ENCODE measurements at regions of chr20 and their contacts with region 1.

Region 1: GRCh38 chr20:50085452-50086365 is 27.2 kb downstream of the UBE2V1 start:
- DNase-seq: no peak
- H3K4me3 ChIP-seq: no peak overlapping the region
- CTCF ChIP-seq: peak; percentile 65

Region 2: DNA sequence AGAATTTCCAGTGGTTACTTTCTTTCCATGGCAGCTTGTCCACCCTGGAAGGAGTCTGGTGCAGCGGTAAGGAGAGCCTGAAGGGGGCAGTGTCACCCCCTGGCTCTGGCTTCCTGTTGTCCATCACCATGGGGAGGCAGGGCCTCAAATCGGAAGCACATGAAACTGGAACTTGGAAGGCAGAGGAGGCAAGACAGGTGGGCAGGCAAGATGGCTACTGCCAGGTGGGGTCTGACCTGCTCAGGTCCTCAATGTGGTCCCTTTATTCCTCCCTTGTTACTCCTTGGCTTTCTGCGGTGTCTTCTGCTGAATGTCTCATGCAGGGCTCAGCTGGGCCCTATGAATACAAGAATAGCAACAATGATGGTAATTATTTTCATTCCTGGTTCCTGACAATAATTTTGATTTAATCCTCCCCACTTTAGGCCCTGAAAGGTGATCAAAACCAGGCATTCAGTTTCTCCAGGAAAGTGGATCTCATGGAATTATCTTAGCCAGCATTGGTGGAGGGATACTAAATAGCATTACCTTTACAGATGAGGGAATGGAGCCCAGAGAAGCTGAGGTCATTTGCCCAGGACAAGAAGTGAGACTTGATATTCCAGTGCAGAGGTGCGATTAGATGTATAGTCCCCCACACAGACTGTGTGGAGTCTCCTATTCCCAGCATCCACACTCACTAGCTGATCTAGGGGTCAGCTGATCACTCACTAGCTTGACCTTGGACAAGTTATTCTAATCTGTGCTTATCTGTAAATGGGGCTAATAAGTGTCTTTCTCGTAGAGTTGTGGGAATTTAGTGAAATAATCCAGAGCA is 120.5 kb before region 1 on chr20:
- CTCF ChIA-PET with region 1: interaction called, 12 read pairs
- POLR2A ChIA-PET with region 1: no interaction called
- DNase-seq: no peak
- H3K4me3 ChIP-seq: no peak overlapping the region
- CTCF ChIP-seq: peak; percentile 57

Region 3: DNA sequence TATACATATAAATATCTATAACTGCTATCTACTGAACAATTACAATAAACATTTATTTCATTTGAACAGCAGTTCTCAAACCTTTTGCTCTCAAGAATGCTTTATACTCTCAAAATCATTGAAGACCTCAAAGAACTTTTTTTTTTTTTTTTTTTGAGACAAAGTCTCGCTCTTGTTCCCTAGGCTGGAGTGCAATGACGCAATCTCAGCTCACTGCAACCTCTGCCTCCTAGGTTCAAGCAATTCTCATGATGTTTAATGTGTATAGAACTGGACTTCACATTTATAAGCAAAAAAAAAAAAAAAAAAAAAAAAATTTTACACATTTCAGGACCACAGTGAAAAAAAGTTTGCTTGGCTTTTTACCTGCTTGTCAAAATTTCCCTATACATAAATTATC is 15.6 kb after region 1 on chr20:
- CTCF ChIA-PET with region 1: interaction called, 99 read pairs
- POLR2A ChIA-PET with region 1: no interaction called
- DNase-seq: no peak
- H3K4me3 ChIP-seq: no peak overlapping the region
- CTCF ChIP-seq: no peak

Region 4: DNA sequence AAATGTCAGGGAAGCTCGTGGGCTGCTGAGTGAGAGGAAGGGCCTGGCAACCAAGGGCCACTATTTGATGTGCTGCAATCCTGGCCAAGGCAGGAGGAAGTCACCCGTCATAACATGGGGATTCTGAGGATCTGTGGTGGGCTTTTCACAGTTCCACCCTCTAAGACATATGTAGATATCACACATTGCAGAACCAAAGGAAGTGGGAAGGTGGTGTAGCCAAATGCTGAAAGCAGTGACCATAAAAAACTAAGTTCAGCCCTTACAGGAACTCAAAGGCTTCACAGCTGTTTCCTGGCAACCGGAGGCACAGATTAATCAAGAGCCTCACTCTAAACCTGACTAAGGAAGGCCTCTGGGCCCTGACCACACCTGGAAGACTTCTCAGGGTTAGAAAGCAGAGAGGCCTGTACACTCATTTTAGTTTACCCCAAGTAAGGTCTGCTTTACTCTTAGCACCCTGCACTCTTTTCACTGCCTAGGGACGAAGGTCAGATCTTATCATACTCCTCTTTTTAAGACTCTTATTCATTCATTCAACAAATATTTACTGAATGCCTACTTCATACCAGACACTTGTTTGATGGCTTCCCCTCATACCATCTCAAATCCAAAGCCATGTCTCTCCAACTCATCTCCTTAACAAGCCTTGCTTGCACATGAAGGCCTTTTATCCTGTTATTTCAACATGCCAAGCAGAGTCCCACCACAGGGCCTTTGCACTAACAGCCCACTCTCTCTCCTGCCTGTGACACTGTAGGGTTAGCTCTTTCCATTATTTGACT is 24.6 kb after region 1 on chr20:
- CTCF ChIA-PET with region 1: interaction called, 29 read pairs
- POLR2A ChIA-PET with region 1: no interaction called
- DNase-seq: no peak
- H3K4me3 ChIP-seq: no peak overlapping the region; the same call in 1 of the 2 replicates
- CTCF ChIP-seq: no peak

Region 5: DNA sequence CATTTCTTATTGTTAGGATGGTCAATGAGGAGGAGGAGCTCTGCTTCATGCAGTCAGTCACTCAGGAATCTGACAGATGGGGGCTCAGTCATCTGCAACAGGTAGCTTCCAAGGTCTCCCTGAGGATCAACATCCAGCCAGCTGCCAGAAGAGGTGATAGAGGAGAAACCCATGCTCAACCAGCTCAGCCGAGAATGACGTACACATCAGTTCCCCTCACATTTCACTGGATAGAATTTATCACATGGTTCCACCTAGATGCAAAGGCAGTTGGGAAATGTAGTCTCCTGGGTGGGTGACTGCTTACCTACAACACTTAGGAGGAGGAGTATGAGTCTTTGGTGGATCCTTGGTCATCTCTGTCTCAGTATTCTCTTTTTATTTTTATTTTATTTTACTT is 249.4 kb after region 1 on chr20:
- CTCF ChIA-PET with region 1: no interaction called
- POLR2A ChIA-PET with region 1: no interaction called
- DNase-seq: no peak
- H3K4me3 ChIP-seq: no peak overlapping the region
- CTCF ChIP-seq: no peak

Region 6: GRCh38 chr20:50438986-50439407 is 353.3 kb after region 1 on chr20:
- CTCF ChIA-PET with region 1: no interaction called
- POLR2A ChIA-PET with region 1: no interaction called
- DNase-seq: no peak
- H3K4me3 ChIP-seq: no peak overlapping the region
- CTCF ChIP-seq: no peak

Measured in AG04449 (cell line).